HEK293 (cell line): ENCODE measurements at regions of chr13 and their contacts with region 1.

Region 1: GRCh38 chr13:32381539-32381938 is 46.4 kb downstream of the N4BP2L1 start:
- H3K4me3 ChIP-seq: no peak overlapping the region
- H3K27ac ChIP-seq: no peak overlapping the region
- H3K4me1 ChIP-seq: no peaks in the 10 kb centered on the region
- CTCF ChIP-seq: 0 out of 2 replicates have a peak, but pooled peaks have one; percentile 22

Region 2: GRCh38 chr13:32354040-32354439 is 27.5 kb before region 1 on chr13:
- CTCF ChIA-PET with region 1: no interaction called
- POLR2A ChIA-PET with region 1: interaction called, 10 read pairs
- H3K4me3 ChIP-seq: no peak overlapping the region
- H3K27ac ChIP-seq: no peak overlapping the region
- H3K4me1 ChIP-seq: no peaks in the 10 kb centered on the region
- CTCF ChIP-seq: no peak